ENCODE measurements at regions of chr1 and their contacts with region 1.

Region 1: GRCh38 chr1:151993654-151994496 is at the start of gene S100A10:
- DNase-seq: no peak
- ATAC-seq: peak; percentile 58
- H3K4me3 ChIP-seq: peak within 1 kb of the TSS; percentile 91 to 92
- H3K27ac ChIP-seq: peak within 1 kb of the TSS; percentile 87
- H3K4me1 ChIP-seq: peaks cover 54 to 74% of the 10 kb centered on the region in 2 experiments
- H3K27me3 ChIP-seq: no peaks in the 10 kb centered on the region
- CTCF ChIP-seq: no peak
- POLR2A ChIP-seq: no peak
- RAD21 ChIP-seq: no peak
- total RNA-seq, gene S100A10: 340 TPM

Region 2: DNA sequence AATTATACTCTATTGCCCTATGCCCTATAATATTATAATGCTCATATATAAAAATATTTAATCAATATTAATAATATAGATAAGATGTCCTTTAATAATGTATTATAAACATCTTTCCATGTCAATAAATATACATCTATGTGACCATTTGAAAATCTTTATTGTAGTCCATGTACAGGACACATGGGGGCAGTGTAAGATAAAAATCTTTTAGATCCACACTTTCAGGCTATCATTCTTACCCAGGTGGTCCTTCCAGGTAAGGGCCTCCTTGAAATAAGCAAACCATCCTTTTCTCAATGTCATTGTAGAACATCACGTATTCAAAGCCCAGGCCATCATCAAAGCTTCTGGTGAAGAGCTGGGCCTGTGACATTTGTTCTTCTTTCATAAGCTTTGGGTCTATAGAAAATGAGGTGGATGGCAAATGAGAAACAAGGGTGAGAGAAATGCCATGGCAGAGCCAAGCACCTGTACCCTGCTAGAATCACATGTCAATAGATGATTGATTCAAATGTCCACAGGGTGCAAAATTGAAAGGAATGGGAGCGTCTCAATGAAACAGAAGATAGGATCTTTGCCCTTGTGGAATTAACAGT is 104.8 kb before region 1 on chr1:
- CTCF ChIA-PET with region 1: interaction called, 5 read pairs
- POLR2A ChIA-PET with region 1: no interaction called
- RAD21 ChIA-PET with region 1: no interaction called
- intact Hi-C with region 1: loop called (anchors 1 kb)
- DNase-seq: no peak
- ATAC-seq: peak; percentile 72
- H3K4me3 ChIP-seq: no peak overlapping the region
- H3K27ac ChIP-seq: no peak overlapping the region
- H3K4me1 ChIP-seq: peaks cover 8 to 12% of the 10 kb centered on the region in 2 experiments; a peak in 2 of 4 replicates
- H3K27me3 ChIP-seq: no peaks in the 10 kb centered on the region
- CTCF ChIP-seq: peak; percentile 22 to 55 (median 53); a peak in 4 of 6 replicates
- POLR2A ChIP-seq: no peak
- RAD21 ChIP-seq: peak; percentile 73

Region 3: GRCh38 chr1:151909150-151910149 is 84.4 kb before region 1 on chr1 and contains the start of gene THEM4:
- CTCF ChIA-PET with region 1: interaction called, 15 read pairs
- POLR2A ChIA-PET with region 1: interaction called, 7 read pairs
- RAD21 ChIA-PET with region 1: no interaction called
- intact Hi-C with region 1: no loop called
- DNase-seq: peak; percentile 92
- ATAC-seq: peak; percentile 95
- H3K4me3 ChIP-seq: peak within 1 kb of the TSS; percentile 86 to 87
- H3K27ac ChIP-seq: peak within 1 kb of the TSS; percentile 74
- H3K4me1 ChIP-seq: peaks cover 7 to 14% of the 10 kb centered on the region in 2 experiments; a peak in 3 of 4 replicates
- H3K27me3 ChIP-seq: no peaks in the 10 kb centered on the region
- CTCF ChIP-seq: no peak
- POLR2A ChIP-seq: peak; percentile 92
- RAD21 ChIP-seq: no peak
- total RNA-seq, gene THEM4: 17.0 TPM

Region 4: GRCh38 chr1:151934048-151934493 is 59.8 kb before region 1 on chr1:
- CTCF ChIA-PET with region 1: interaction called, 140 read pairs
- POLR2A ChIA-PET with region 1: no interaction called
- RAD21 ChIA-PET with region 1: interaction called, 3 read pairs
- intact Hi-C with region 1: loop called (anchors 1 kb)
- DNase-seq: no peak
- ATAC-seq: peak; percentile 97
- H3K4me3 ChIP-seq: no peak overlapping the region
- H3K27ac ChIP-seq: no peak overlapping the region
- H3K4me1 ChIP-seq: no peaks in the 10 kb centered on the region; a peak in 1 of 4 replicates
- H3K27me3 ChIP-seq: no peaks in the 10 kb centered on the region
- CTCF ChIP-seq: peak; percentile 86 to 95 (median 86)
- POLR2A ChIP-seq: no peak
- RAD21 ChIP-seq: peak; percentile 96

Region 5: DNA sequence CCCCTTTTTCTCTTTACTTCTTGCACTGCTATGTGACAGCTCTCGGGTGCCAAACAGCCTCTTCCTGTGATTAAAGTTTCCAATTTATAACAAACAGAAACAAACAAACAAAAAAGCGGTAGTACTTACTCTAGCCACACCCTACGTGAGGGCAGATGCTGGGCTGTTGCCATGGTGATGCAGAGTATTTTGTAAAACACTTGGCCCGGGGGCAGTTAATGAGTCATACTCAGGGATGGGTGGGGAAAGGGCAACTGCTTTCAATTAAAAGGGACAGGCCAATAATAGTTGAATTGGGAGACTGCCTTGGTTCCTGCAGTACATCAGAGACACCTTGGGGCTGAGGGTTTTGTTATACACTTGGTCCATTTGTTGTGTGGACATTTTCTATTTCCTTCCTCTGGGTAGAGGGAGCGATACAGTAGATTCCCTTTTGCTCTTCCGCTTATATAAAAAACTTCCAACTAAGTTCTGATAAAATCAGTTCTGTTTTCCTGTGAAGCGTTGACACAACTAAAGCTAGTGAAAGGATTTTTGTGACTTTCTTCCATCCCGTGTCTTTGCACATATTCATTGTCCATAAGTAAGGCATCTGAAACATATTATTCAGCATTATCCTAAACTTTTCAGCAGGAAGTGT is 48.0 kb before region 1 on chr1:
- CTCF ChIA-PET with region 1: no interaction called
- POLR2A ChIA-PET with region 1: interaction called, 3 read pairs
- RAD21 ChIA-PET with region 1: interaction called in 1 of 2 experiments, 3 read pairs
- intact Hi-C with region 1: loop called (anchors 2 kb)
- DNase-seq: peak; percentile 93
- ATAC-seq: peak; percentile 78
- H3K4me3 ChIP-seq: peak overlapping the region in 1 of 2 experiments; percentile 5; a peak in 1 of 4 replicates
- H3K27ac ChIP-seq: peak overlapping the region; percentile 7; the same call in 1 of the 2 replicates
- H3K4me1 ChIP-seq: peaks cover 29 to 55% of the 10 kb centered on the region in 2 experiments
- H3K27me3 ChIP-seq: no peaks in the 10 kb centered on the region
- CTCF ChIP-seq: no peak
- POLR2A ChIP-seq: no peak
- RAD21 ChIP-seq: no peak; the same call in 1 of the 2 replicates

Region 6: GRCh38 chr1:151968058-151968457 is 25.8 kb before region 1 on chr1:
- CTCF ChIA-PET with region 1: interaction called, 168 read pairs
- POLR2A ChIA-PET with region 1: interaction called, 8 read pairs
- RAD21 ChIA-PET with region 1: interaction called, 11 to 25 read pairs
- intact Hi-C with region 1: loop called (anchors 1 kb)
- DNase-seq: no peak
- ATAC-seq: peak; percentile 71
- H3K4me3 ChIP-seq: no peak overlapping the region
- H3K27ac ChIP-seq: no peak overlapping the region
- H3K4me1 ChIP-seq: peaks cover 35 to 50% of the 10 kb centered on the region in 2 experiments; a peak in 3 of 4 replicates
- H3K27me3 ChIP-seq: no peaks in the 10 kb centered on the region
- CTCF ChIP-seq: peak; percentile 79 to 91 (median 85)
- POLR2A ChIP-seq: no peak
- RAD21 ChIP-seq: peak; percentile 98

Region 7: DNA sequence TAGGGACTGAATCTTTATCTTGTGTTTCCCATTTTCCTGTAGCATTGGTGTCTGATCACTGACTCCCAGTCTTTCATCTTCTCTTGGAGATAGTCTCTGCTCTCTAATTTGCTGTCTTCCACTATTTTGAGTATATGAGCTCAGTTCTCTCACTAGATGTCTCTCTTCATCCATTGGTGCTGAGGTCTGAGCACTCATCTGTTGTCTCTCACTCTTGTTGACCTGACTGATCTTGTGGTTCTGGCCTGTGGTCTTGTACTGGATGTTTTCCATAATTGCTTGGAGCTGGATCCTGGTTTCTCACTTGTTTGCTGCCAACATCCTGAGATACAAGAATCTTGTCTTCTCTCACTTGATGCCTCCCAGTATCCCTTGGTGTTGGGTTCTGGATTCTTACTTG is 68.1 kb after region 1 on chr1:
- CTCF ChIA-PET with region 1: no interaction called
- POLR2A ChIA-PET with region 1: no interaction called
- RAD21 ChIA-PET with region 1: no interaction called
- intact Hi-C with region 1: no loop called
- DNase-seq: no peak
- ATAC-seq: no peak
- H3K4me3 ChIP-seq: no peak overlapping the region
- H3K27ac ChIP-seq: no peak overlapping the region
- H3K4me1 ChIP-seq: no peaks in the 10 kb centered on the region
- H3K27me3 ChIP-seq: peaks cover 45% of the 10 kb centered on the region
- CTCF ChIP-seq: no peak
- POLR2A ChIP-seq: no peak
- RAD21 ChIP-seq: no peak

Measured in HCT116 (cell line).